H1 (cell line): ENCODE measurements at regions of chrX and their contacts with region 1.

Region 1: GRCh38 chrX:30735839-30736238 is 82.6 kb downstream of the GK start:
- DNase-seq: peak; percentile 25 to 76
- H3K4me3 ChIP-seq: no peak overlapping the region
- H3K27ac ChIP-seq: no peak overlapping the region
- H3K4me1 ChIP-seq: no peaks in the 10 kb centered on the region
- H3K27me3 ChIP-seq: no peaks in the 10 kb centered on the region
- CTCF ChIP-seq: peak in 2 of 3 experiments; percentile 64 to 69; a peak in 3 of 4 replicates
- EP300 ChIP-seq: no peak
- POLR2A ChIP-seq: no peak
- RAD21 ChIP-seq: peak; percentile 81 to 89

Region 2: DNA sequence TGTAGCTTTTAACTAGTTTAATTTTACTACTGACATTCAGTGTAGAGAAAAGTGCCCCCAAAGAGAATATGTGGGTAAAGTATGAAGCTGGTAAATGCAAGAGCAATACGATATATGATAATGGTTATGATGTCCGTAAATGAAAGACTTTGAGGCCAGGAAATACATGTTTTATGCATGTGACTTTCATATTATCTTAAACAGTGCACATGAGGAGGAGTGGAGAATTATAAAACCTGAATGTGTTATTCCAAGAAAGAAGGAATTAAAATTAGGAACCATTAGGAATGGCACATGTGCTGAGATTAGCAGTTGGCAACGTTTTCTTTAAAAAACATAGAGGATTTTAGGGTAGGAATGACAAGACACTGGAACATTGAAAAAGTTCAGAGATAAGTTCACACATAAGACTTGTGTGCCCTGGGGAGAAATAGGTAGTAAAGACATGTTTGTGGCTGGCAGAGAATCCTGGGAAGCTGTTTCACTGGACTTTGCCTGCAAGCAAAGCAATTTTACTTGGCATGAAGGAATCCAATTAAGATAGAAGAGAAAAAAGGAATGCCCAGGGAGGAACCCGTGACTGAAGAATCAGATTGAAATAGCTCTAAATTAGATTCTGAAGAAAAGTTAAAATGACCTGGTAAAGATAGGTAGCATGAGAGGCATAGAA is 62.6 kb before region 1 on chrX:
- CTCF ChIA-PET with region 1: no interaction called
- POLR2A ChIA-PET with region 1: no interaction called
- DNase-seq: no peak
- H3K4me3 ChIP-seq: no peak overlapping the region
- H3K27ac ChIP-seq: no peak overlapping the region
- H3K4me1 ChIP-seq: no peaks in the 10 kb centered on the region
- H3K27me3 ChIP-seq: no peaks in the 10 kb centered on the region
- CTCF ChIP-seq: no peak
- EP300 ChIP-seq: no peak
- POLR2A ChIP-seq: no peak
- RAD21 ChIP-seq: no peak

Region 3: GRCh38 chrX:30748393-30748841 is 12.6 kb after region 1 on chrX:
- CTCF ChIA-PET with region 1: interaction called, 12 read pairs
- POLR2A ChIA-PET with region 1: no interaction called
- DNase-seq: no peak
- H3K4me3 ChIP-seq: no peak overlapping the region
- H3K27ac ChIP-seq: no peak overlapping the region
- H3K4me1 ChIP-seq: no peaks in the 10 kb centered on the region
- H3K27me3 ChIP-seq: no peaks in the 10 kb centered on the region
- CTCF ChIP-seq: no peak
- EP300 ChIP-seq: no peak
- POLR2A ChIP-seq: no peak
- RAD21 ChIP-seq: no peak

Region 4: DNA sequence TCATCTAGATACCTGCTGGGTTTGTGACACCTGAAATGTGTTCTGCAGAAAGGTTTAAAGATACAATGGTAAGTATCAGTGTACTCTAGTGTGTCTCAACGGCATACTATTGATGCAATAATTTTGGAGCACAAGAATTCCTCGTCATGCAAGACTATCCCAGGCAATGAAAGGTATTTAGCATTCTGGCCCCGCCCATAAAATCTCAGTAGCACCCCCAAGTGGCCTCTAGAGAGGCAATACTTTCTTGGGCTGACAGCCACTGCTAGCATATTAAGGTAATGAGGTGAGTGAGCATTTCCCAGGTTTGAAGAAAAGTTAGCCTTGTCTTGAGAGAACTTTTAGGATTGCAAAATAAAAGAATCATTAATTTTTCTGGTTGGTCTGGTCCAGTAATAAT is 129.2 kb after region 1 on chrX:
- CTCF ChIA-PET with region 1: interaction called, 22 read pairs
- POLR2A ChIA-PET with region 1: no interaction called
- DNase-seq: peak in 1 of 2 experiments; percentile 42
- H3K4me3 ChIP-seq: no peak overlapping the region
- H3K27ac ChIP-seq: no peak overlapping the region
- H3K4me1 ChIP-seq: no peaks in the 10 kb centered on the region
- H3K27me3 ChIP-seq: no peaks in the 10 kb centered on the region
- CTCF ChIP-seq: peak in 2 of 3 experiments; percentile 32 to 42; a peak in 2 of 4 replicates
- EP300 ChIP-seq: no peak
- POLR2A ChIP-seq: no peak
- RAD21 ChIP-seq: peak in 1 of 2 experiments; percentile 31; a peak in 2 of 4 replicates